Left ventricle myocardium inferior (tissue), 1 donor: ENCODE measurements at regions of chr1 and their contacts with region 1.

Region 1: DNA sequence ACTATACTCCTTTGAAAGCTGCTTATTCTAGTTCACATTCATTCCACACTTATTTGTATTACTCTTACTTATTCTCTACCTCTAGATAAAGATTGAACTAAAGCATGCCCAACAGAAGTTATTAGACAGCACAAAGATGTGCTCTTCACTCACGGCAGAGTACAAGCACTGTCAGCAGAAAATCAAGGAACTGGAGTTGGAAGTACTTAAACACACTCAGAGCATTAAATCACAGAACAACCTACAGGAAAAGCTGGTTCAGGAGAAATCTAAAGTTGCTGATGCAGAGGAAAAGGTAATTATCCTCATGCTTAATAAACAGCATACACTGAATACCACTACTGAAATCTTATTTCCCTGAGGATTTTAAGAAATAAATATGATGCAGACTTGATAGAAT is 81.3 kb upstream of the PPIH start:
- DNase-seq: no peak
- H3K4me3 ChIP-seq: no peak overlapping the region
- H3K27ac ChIP-seq: no peak overlapping the region
- H3K4me1 ChIP-seq: no peaks in the 10 kb centered on the region
- H3K27me3 ChIP-seq: no peaks in the 10 kb centered on the region
- CTCF ChIP-seq: no peak

Region 2: DNA sequence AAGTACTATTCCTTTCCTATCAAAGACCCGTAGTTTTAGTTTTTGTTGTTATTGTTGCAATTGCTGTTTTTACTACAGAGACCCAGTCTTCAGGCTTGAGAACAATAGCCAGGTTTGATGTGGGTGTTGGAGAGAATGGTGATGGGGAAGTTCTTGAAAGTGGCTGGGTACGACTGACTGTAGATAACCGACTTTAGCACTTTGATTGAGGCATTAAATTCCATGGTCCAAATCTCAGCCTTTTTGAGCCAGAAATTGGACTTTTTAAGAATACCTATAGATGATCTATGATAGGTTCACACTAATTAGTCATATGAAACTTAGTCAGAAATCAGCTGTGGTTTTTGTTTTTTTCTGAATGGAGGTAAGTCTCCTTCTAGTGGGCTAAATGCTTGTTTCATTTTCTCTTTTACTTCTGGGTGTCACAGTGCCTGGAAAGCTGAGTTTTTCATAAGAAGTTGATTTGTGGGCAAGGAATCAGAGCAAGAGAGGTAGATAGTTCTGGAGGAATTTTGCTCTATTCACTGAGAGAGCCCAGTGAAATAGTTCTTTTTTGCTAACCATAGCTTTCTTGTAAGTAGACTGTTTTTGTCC is 84.1 kb after region 1 on chr1:
- intact Hi-C with region 1: no loop called
- DNase-seq: no peak
- H3K4me3 ChIP-seq: no peak overlapping the region
- H3K27ac ChIP-seq: no peak overlapping the region
- H3K4me1 ChIP-seq: peaks cover 25% of the 10 kb centered on the region
- H3K27me3 ChIP-seq: no peaks in the 10 kb centered on the region
- CTCF ChIP-seq: no peak

Region 3: GRCh38 chr1:42692461-42692860 is 115.5 kb after region 1 on chr1:
- intact Hi-C with region 1: no loop called
- DNase-seq: no peak
- H3K4me3 ChIP-seq: no peak overlapping the region
- H3K27ac ChIP-seq: no peak overlapping the region
- H3K4me1 ChIP-seq: peaks cover 67% of the 10 kb centered on the region
- H3K27me3 ChIP-seq: no peaks in the 10 kb centered on the region
- CTCF ChIP-seq: no peak

Region 4: DNA sequence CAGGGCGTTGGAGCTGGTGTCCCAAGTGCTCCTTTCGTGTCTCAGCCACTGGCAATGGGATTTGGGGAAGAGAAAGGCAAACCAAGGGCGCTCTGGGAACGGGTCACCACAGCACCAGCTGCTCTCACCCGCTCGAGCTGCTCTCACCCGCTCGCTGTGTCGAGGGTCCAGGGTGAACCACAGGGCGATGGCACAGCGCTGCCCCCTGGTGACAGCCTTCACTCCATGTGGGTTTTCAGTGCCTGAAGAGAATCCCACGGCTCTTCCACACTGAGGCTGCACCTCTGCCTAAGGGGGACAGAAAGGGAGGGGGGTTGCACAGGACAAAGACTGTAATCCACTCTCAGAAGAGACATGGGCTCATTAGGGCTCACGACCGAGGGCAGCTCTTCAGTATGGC is 170.2 kb after region 1 on chr1:
- intact Hi-C with region 1: loop called (anchors 5 kb)
- DNase-seq: peak; percentile 40
- H3K4me3 ChIP-seq: no peak overlapping the region
- H3K27ac ChIP-seq: no peak overlapping the region
- H3K4me1 ChIP-seq: no peaks in the 10 kb centered on the region
- H3K27me3 ChIP-seq: no peaks in the 10 kb centered on the region
- CTCF ChIP-seq: peak; percentile 75